ENCODE measurements at regions of chr5 and their contacts with region 1.

Region 1: GRCh38 chr5:131417240-131417869 is 153.5 kb downstream of the CDC42SE2 start:
- DNase-seq: peak; percentile 71
- ATAC-seq: peak; percentile 76
- H3K4me3 ChIP-seq: no peak overlapping the region
- H3K27ac ChIP-seq: no peak overlapping the region
- H3K4me1 ChIP-seq: no peaks in the 10 kb centered on the region
- H3K27me3 ChIP-seq: no peaks in the 10 kb centered on the region
- CTCF ChIP-seq: peak; percentile 84
- POLR2A ChIP-seq: no peak
- RAD21 ChIP-seq: peak; percentile 85

Region 2: DNA sequence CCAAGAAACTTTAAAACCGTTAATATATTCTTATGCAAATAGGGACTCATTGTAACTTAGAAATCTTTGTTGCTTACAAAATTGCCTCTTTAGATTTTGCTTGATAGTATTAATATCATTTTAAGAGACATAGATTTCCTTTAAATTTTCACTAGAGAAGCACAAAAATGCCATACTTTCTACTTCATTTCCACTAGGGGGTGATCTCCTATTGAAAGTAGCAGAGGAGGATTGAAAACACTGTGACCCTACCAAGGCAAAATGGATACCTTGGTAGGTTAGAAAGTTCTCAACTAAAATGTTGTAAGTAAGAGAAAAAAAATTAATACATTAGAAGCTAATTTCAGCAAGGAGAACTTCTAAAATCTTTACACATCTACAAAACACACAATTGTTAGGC is 1308.2 kb before region 1 on chr5:
- CTCF ChIA-PET with region 1: no interaction called
- POLR2A ChIA-PET with region 1: no interaction called
- dilution Hi-C with region 1: no loop called
- in situ Hi-C with region 1: loop called (anchors 25 kb)
- intact Hi-C with region 1: loop called (anchors 5 kb)
- DNase-seq: peak; percentile 18
- ATAC-seq: no peak; the same call in 1 of the 2 replicates
- H3K4me3 ChIP-seq: no peak overlapping the region
- H3K27ac ChIP-seq: no peak overlapping the region
- H3K4me1 ChIP-seq: no peaks in the 10 kb centered on the region
- H3K27me3 ChIP-seq: no peaks in the 10 kb centered on the region
- CTCF ChIP-seq: peak; percentile 46
- POLR2A ChIP-seq: no peak
- RAD21 ChIP-seq: peak; percentile 46

Region 3: DNA sequence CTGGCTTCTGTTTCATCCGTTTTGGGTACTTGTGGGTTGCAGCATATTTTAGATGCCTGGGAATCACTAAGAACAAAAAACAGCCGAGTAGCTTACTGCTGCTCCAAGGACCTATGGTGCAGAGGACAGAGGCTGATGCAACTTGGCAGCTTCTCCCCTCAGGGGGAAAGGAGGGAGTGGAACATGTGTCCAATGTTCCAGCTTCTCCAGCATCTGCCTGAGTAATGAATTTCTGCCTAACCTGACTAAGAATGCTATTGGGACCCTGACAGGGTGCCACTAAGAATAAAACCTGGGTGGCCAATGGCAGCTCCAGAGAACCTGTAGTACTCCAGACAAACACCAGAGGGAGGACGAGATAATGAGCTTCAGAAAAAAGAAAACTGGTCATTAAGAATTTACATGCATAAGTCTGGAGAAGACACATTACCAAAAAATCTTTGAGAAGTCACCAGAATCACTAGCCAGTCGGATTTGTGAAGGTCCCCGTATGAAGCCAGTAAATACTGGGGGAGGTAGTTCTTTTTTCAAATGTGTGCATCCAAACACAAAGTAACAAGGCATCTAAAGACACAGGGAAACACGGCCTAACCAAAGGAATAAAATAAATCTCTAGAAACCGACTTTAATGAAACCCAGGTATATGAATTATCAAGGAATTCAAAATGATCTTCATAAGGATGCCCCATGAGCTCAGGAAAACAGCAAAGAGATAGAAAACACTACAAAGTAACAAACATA is 545.8 kb before region 1 on chr5:
- CTCF ChIA-PET with region 1: no interaction called
- POLR2A ChIA-PET with region 1: no interaction called
- dilution Hi-C with region 1: no loop called
- in situ Hi-C with region 1: loop called (anchors 25 kb)
- intact Hi-C with region 1: no loop called
- DNase-seq: peak; percentile 1
- ATAC-seq: peak; percentile 14; the same call in 1 of the 2 replicates
- H3K4me3 ChIP-seq: no peak overlapping the region
- H3K27ac ChIP-seq: no peak overlapping the region
- H3K4me1 ChIP-seq: no peaks in the 10 kb centered on the region
- H3K27me3 ChIP-seq: no peaks in the 10 kb centered on the region
- CTCF ChIP-seq: peak; percentile 50
- POLR2A ChIP-seq: no peak
- RAD21 ChIP-seq: peak; percentile 46

Measured in IMR-90 (cell line).